ENCODE measurements at regions of chr5 and their contacts with region 1.

Region 1: DNA sequence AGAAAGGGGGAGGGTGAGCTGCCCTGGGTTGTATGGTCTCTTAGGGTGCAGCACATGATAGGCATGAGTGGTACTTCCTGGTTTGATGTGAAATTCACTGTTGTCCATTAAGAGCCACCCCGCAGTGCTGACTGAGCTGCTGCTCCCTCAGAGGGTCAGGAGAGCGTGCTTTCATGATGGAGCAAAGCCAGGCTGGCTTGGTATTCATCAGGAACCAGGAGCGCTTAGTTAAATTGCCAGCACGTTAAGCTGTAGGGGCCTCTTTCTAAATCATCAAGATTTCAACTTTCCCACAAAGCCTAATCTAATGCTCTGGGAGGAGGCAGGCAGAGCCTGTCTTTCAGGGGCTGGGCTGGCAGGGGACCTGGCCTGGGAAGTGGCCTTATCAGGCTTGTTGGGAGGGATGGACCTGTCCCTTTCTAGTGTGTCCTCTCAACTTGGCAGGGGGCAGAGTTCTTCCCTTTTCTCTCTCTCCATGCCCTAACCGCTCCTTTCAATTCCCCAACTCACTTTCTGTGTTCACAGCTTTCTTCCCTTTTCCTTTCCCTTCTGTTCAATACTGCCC is 7.9 kb downstream of the CYSTM1 start:
- DNase-seq: peak; percentile 44
- ATAC-seq: peak; percentile 64
- H3K4me3 ChIP-seq: no peak overlapping the region
- H3K27ac ChIP-seq: no peak overlapping the region
- H3K4me1 ChIP-seq: peaks cover 6% of the 10 kb centered on the region
- H3K27me3 ChIP-seq: no peaks in the 10 kb centered on the region
- CTCF ChIP-seq: no peak
- POLR2A ChIP-seq: no peak
- RAD21 ChIP-seq: no peak

Region 2: DNA sequence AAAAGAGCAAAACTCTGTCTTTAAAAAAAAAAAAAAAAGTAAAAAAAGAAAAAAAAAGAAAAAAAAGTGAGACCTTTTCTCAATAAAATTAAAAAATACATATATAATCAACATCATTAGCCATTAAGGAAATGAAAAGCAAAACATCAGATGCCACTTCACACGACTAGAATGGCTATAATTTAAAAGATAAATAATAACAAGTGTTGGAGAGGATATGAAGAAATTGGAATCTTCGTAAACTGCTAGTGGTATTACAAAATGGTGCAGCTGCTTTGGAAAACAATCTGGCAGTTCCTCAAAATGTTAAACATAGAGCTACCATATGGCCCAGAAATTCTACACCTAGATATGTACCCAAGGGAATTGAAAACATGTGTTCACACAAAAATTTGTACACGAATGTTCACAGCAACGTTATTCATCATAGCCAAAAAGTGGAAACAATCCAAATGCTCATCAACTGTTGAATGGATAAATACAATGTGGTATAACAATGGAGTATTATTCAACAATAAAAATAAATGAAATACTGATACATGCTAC is 939.4 kb before region 1 on chr5:
- CTCF ChIA-PET with region 1: no interaction called
- POLR2A ChIA-PET with region 1: interaction called, 11 read pairs
- dilution Hi-C with region 1: no loop called
- in situ Hi-C with region 1: no loop called
- intact Hi-C with region 1: no loop called
- DNase-seq: peak; percentile 59
- ATAC-seq: no peak
- H3K4me3 ChIP-seq: no peak overlapping the region
- H3K27ac ChIP-seq: no peak overlapping the region
- H3K4me1 ChIP-seq: peaks cover 5% of the 10 kb centered on the region
- H3K27me3 ChIP-seq: peaks cover 14% of the 10 kb centered on the region
- CTCF ChIP-seq: no peak
- POLR2A ChIP-seq: no peak
- RAD21 ChIP-seq: no peak

Region 3: GRCh38 chr5:140220032-140220697 is 37.3 kb after region 1 on chr5:
- CTCF ChIA-PET with region 1: no interaction called
- POLR2A ChIA-PET with region 1: no interaction called
- dilution Hi-C with region 1: no loop called
- in situ Hi-C with region 1: no loop called
- intact Hi-C with region 1: loop called (anchors 5 kb)
- DNase-seq: peak; percentile 66
- ATAC-seq: peak; percentile 42
- H3K4me3 ChIP-seq: no peak overlapping the region
- H3K27ac ChIP-seq: no peak overlapping the region
- H3K4me1 ChIP-seq: peaks cover 12% of the 10 kb centered on the region
- H3K27me3 ChIP-seq: peaks cover 3% of the 10 kb centered on the region; the same call in 1 of the 2 replicates
- CTCF ChIP-seq: no peak
- POLR2A ChIP-seq: no peak
- RAD21 ChIP-seq: no peak